ENCODE measurements at regions of chrX and their contacts with region 1.

Region 1: GRCh38 chrX:20442597-20442996 is 175.9 kb upstream of the RPS6KA3 start:
- DNase-seq: peak; percentile 85
- H3K4me3 ChIP-seq: no peak overlapping the region
- H3K27ac ChIP-seq: no peak overlapping the region
- H3K4me1 ChIP-seq: no peaks in the 10 kb centered on the region
- H3K27me3 ChIP-seq: no peaks in the 10 kb centered on the region
- CTCF ChIP-seq: peak; percentile 79

Region 2: DNA sequence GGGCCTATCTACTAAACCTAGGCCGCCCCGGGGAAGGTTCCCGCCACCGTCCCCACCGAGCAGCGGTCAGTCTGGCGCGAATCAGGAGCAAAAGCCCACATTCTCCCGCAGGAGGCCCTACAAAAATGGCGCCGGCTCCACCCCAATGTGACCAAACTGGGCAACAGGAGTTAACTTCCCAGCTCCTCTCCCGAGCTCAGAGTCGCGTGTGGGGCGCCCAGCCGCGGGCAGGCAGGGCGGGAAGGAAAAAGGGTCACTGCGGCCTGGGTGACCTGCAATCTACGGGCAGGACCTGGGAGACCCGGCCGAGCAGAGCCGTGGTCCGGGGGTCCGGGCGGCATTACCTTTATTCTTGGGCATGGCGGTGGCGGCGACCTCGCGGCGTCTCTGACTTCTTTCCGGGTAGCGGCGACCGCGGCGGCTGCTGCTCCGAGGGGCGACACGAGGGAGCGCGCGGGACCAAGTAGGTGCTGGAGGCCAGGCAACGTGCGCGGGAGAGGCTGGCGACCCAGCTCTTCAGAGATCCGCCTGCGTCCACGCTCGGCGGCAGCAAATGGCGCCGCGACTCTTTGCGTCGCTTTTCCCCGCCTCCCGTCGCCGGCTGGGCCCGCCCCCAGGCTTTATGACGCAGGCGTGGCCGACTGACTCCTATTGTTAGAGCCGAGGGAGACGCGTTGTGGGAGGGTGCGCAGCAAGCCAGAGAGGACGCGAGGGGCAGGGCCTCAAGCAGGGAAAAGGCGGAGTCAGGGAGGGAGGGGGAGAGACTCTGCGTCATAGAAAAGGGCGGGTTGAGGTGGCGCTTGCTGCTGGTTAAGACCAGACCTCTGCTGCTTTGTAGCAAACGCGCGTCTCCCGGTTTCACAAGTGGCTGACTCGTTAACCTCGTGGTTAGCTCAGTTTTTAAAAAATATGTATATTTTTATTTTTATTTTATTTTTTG is 301.0 kb before region 1 on chrX and contains the start of gene EIF1AX:
- CTCF ChIA-PET with region 1: no interaction called
- POLR2A ChIA-PET with region 1: no interaction called
- intact Hi-C with region 1: loop called (anchors 10 kb)
- DNase-seq: peak; percentile 99
- H3K4me3 ChIP-seq: peak within 1 kb of the TSS; percentile 72
- H3K27ac ChIP-seq: peak within 1 kb of the TSS; percentile 88
- H3K4me1 ChIP-seq: peaks cover 6% of the 10 kb centered on the region
- H3K27me3 ChIP-seq: no peaks in the 10 kb centered on the region
- CTCF ChIP-seq: no peak
- total RNA-seq, gene EIF1AX: 175 and 184 TPM in 2 replicates

Region 3: GRCh38 chrX:20252381-20253231 is 190.0 kb before region 1 on chrX:
- CTCF ChIA-PET with region 1: no interaction called
- POLR2A ChIA-PET with region 1: no interaction called
- intact Hi-C with region 1: loop called (anchors 1 kb)
- DNase-seq: peak; percentile 68
- H3K4me3 ChIP-seq: no peak overlapping the region
- H3K27ac ChIP-seq: no peak overlapping the region
- H3K4me1 ChIP-seq: no peaks in the 10 kb centered on the region
- H3K27me3 ChIP-seq: no peaks in the 10 kb centered on the region
- CTCF ChIP-seq: peak; percentile 74

Measured in A673 (cell line).